Colonic mucosa (tissue), 4 donors: ENCODE measurements at regions of chr10 and their contacts with region 1.

Region 1: DNA sequence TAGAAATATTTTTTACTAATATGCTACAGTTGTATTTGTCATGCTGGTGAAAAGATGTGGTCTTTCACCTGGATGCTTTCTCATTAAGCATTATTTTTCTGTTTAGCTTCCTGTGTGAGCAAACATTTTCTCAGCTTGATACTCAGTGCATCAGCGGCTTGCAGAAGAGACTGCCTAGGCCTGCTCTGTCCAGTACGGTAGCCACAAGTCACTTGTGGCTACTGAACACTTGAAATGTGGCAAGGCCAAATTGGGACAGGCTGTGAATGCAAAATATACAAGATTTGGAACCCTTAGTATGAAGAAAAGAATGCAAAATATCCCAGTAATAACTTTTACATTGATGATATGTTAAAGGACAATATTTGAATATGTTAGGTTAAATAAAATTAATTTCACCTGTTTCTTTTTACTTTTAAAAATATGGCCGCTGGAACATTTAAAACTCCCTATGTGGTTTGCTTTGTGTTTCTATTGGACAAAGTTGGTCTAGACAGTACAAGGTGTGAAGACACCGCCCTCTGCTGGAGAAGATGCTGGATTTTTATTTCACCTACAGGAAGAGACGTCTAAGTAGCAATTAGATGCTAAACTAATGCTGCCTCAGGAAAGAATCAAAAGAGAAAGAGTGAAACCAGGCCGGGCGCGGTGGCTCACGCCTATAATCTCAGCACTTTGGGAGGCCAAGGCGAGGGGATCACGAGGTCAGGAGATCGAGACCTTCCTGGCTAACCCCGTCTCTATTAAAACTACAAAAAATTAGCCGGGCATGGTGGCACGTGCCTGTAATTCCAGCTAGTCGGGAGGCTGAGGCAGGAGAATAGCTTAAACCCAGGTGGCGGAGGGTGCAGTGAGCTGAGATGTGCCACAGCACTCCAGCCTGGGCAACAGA is 5.3 kb downstream of the SRGN start:
- DNase-seq: peak; percentile 88
- H3K4me3 ChIP-seq: no peak overlapping the region
- H3K27ac ChIP-seq: no peak overlapping the region
- H3K4me1 ChIP-seq: no peaks in the 10 kb centered on the region
- H3K27me3 ChIP-seq: no peaks in the 10 kb centered on the region
- CTCF ChIP-seq: peak; percentile 68

Region 2: GRCh38 chr10:69004821-69005220 is 88.4 kb before region 1 on chr10:
- intact Hi-C with region 1: loop called (anchors 5 kb)
- DNase-seq: no peak
- H3K4me3 ChIP-seq: no peak overlapping the region
- H3K27ac ChIP-seq: no peak overlapping the region
- H3K4me1 ChIP-seq: no peaks in the 10 kb centered on the region
- H3K27me3 ChIP-seq: no peaks in the 10 kb centered on the region
- CTCF ChIP-seq: peak; percentile 40

Region 3: DNA sequence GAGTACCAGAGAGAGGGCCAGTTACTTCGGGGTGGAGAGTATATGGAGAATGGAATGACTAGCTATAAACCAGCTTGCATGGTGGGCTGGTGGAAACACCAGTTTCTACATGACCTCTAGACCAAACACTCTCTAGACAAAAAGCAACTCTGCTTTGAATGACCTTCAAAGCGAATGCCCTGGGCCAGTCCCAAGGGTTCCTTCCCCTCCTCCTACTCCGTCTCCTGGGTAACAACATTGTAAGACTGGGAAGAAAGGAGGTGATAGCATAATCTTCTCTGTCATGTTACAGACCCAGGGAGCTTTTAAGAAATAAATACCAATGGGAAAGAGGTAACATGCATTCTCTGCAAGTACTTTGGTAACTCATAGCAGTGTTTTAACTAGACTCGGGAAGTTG is 192.5 kb after region 1 on chr10:
- intact Hi-C with region 1: no loop called
- DNase-seq: no peak
- H3K4me3 ChIP-seq: no peak overlapping the region
- H3K27ac ChIP-seq: no peak overlapping the region
- H3K4me1 ChIP-seq: no peaks in the 10 kb centered on the region
- H3K27me3 ChIP-seq: no peaks in the 10 kb centered on the region
- CTCF ChIP-seq: no peak